CD8-positive, alpha-beta T cell (primary cell): ENCODE measurements at regions of chr6 and their contacts with region 1.

Region 1: DNA sequence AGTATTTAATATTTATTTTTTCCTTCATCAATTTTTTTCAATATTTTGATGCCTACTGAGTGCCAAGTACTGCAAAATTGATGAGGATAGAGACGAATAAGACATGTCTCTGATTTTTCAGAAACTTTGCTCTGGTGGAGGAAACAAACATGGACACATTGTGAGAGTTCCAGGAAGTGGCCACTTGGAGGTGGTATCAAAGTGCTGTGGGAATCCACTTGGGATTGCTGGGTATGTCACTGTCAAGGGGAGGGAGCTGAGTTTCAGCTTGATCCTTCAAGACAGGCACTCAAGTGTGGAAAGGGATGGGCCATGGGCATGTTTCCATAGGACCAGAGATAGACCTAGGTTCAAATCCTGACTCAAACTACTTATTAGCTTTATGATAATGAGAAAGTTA is 24.5 kb upstream of the ABCC10 start:
- DNase-seq: no peak
- ATAC-seq: no peak
- H3K4me3 ChIP-seq: no peak overlapping the region
- H3K4me3 Mint-ChIP-seq: no peak overlapping the region
- H3K27ac ChIP-seq: no peak overlapping the region
- H3K27ac Mint-ChIP-seq: no peak overlapping the region
- H3K4me1 ChIP-seq: peaks cover 2% of the 10 kb centered on the region
- H3K4me1 Mint-ChIP-seq: peaks cover 3% of the 10 kb centered on the region
- H3K27me3 ChIP-seq: peaks cover 0 to 3% of the 10 kb centered on the region in 2 experiments
- H3K27me3 Mint-ChIP-seq: peaks cover 23% of the 10 kb centered on the region
- CTCF ChIP-seq: no peak

Region 2: DNA sequence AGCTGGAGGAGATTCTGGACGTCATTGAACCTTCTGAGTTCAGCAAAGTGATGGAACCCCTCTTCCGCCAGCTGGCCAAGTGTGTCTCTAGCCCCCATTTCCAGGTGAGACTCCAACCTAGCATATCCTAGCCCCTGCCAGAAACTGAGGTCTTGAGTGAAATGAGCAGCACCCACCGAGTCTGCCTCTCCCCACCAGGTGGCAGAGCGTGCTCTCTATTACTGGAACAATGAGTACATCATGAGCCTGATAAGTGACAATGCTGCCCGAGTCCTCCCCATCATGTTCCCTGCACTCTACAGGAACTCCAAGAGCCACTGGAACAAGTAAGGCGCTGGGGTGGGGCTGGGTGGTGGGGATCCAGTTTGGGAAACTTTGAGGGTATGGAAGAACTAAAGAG is 393.7 kb before region 1 on chr6:
- CTCF ChIA-PET with region 1: no interaction called
- POLR2A ChIA-PET with region 1: no interaction called
- intact Hi-C with region 1: no loop called
- DNase-seq: peak in 5 of 9 experiments; percentile 33 to 62 (median 47)
- ATAC-seq: no peak
- H3K4me3 ChIP-seq: no peak overlapping the region
- H3K4me3 Mint-ChIP-seq: no peak overlapping the region
- H3K27ac ChIP-seq: no peak overlapping the region
- H3K27ac Mint-ChIP-seq: no peak overlapping the region
- H3K4me1 ChIP-seq: peaks cover 14% of the 10 kb centered on the region
- H3K4me1 Mint-ChIP-seq: peaks cover 30% of the 10 kb centered on the region
- H3K27me3 ChIP-seq: no peaks in the 10 kb centered on the region
- H3K27me3 Mint-ChIP-seq: no peaks in the 10 kb centered on the region
- CTCF ChIP-seq: peak; percentile 17

Region 3: GRCh38 chr6:43263314-43264178 is 139.3 kb before region 1 on chr6:
- CTCF ChIA-PET with region 1: interaction called, 52 read pairs
- POLR2A ChIA-PET with region 1: no interaction called
- intact Hi-C with region 1: loop called in 1 of 2 experiments (anchors 1 kb)
- DNase-seq: peak; percentile 57 to 84 (median 75)
- ATAC-seq: peak; percentile 95
- H3K4me3 ChIP-seq: no peak overlapping the region
- H3K4me3 Mint-ChIP-seq: no peak overlapping the region
- H3K27ac ChIP-seq: no peak overlapping the region
- H3K27ac Mint-ChIP-seq: no peak overlapping the region
- H3K4me1 ChIP-seq: no peaks in the 10 kb centered on the region
- H3K4me1 Mint-ChIP-seq: no peaks in the 10 kb centered on the region
- H3K27me3 ChIP-seq: no peaks in the 10 kb centered on the region
- H3K27me3 Mint-ChIP-seq: peaks cover 3% of the 10 kb centered on the region
- CTCF ChIP-seq: peak; percentile 57

Region 4: GRCh38 chr6:43269273-43270007 is 133.4 kb before region 1 on chr6:
- CTCF ChIA-PET with region 1: interaction called, 52 read pairs
- POLR2A ChIA-PET with region 1: no interaction called
- intact Hi-C with region 1: no loop called
- DNase-seq: peak in 8 of 9 experiments; percentile 22 to 61 (median 44)
- ATAC-seq: peak; percentile 81
- H3K4me3 ChIP-seq: peak overlapping the region; percentile 49 to 54
- H3K4me3 Mint-ChIP-seq: peak overlapping the region; percentile 76
- H3K27ac ChIP-seq: no peak overlapping the region
- H3K27ac Mint-ChIP-seq: no peak overlapping the region
- H3K4me1 ChIP-seq: peaks cover 10% of the 10 kb centered on the region
- H3K4me1 Mint-ChIP-seq: peaks cover 6% of the 10 kb centered on the region
- H3K27me3 ChIP-seq: peaks cover 0 to 4% of the 10 kb centered on the region in 2 experiments
- H3K27me3 Mint-ChIP-seq: peaks cover 15% of the 10 kb centered on the region
- CTCF ChIP-seq: no peak

Region 5: GRCh38 chr6:43308101-43308989 is 94.5 kb before region 1 on chr6 and contains the start of gene CRIP3:
- CTCF ChIA-PET with region 1: interaction called, 24 read pairs
- POLR2A ChIA-PET with region 1: interaction called, 3 read pairs
- intact Hi-C with region 1: loop called (anchors 1 kb)
- DNase-seq: peak in 8 of 9 experiments; percentile 21 to 68 (median 50)
- ATAC-seq: peak; percentile 86
- H3K4me3 ChIP-seq: peak within 1 kb of the TSS; percentile 36 to 48
- H3K4me3 Mint-ChIP-seq: peak within 1 kb of the TSS; percentile 77
- H3K27ac ChIP-seq: no peak within 1 kb of the TSS
- H3K27ac Mint-ChIP-seq: no peak within 1 kb of the TSS
- H3K4me1 ChIP-seq: peaks cover 12% of the 10 kb centered on the region
- H3K4me1 Mint-ChIP-seq: peaks cover 9% of the 10 kb centered on the region
- H3K27me3 ChIP-seq: no peaks in the 10 kb centered on the region
- H3K27me3 Mint-ChIP-seq: peaks cover 5% of the 10 kb centered on the region
- CTCF ChIP-seq: peak; percentile 41
- total RNA-seq, gene CRIP3: 0.64 to 0.84 TPM

Region 6: GRCh38 chr6:43361269-43361668 is 41.6 kb before region 1 on chr6:
- CTCF ChIA-PET with region 1: interaction called, 47 read pairs
- POLR2A ChIA-PET with region 1: no interaction called
- intact Hi-C with region 1: loop called in 1 of 2 experiments (anchors 1 kb)
- DNase-seq: peak in 1 of 9 experiments; percentile 30
- ATAC-seq: peak; percentile 48
- H3K4me3 ChIP-seq: no peak overlapping the region
- H3K4me3 Mint-ChIP-seq: no peak overlapping the region
- H3K27ac ChIP-seq: no peak overlapping the region
- H3K27ac Mint-ChIP-seq: no peak overlapping the region
- H3K4me1 ChIP-seq: peaks cover 3% of the 10 kb centered on the region
- H3K4me1 Mint-ChIP-seq: peaks cover 30% of the 10 kb centered on the region
- H3K27me3 ChIP-seq: no peaks in the 10 kb centered on the region
- H3K27me3 Mint-ChIP-seq: no peaks in the 10 kb centered on the region
- CTCF ChIP-seq: no peak

Region 7: DNA sequence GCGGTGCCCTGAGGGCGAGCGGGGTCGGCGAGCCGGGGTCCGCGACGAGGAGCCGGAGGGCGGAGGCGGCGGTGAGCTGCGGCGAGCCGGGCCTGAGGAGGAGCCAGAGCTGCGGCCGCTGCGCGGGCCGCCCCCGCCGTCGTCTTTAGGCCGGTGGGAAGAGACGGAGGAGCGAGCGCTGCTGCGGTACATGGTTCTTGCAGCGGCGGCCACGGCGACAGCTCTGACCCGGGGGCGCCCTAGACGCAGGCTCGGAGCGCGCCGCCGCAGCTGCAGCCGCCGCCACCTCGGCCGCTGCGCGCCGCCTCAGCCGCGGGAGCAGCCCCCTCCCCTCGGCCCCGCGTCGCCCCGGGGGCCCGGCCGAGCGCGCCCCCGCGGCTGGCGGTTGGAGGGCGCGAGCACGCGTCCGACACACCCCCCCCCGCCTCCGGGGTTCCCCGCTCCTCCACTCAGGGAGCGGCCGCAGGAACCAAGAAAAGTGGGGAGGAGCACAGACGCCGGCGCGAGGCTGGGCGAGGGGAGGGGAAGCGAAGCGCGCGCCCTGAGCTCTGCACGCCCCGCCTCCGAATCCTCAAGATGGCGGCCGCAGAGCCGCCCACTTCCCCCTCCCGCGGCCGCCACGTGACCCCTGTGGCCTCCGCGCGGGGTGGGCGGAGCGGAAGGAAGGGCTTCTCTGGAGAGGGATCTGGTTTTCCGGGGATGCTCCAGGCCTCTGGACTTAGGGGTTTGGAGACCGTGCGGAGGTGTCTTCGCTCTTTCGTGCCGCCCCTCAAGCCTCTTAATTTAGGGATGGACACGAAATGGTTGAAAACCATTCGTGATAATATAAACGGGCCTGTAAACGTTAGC is 33.4 kb before region 1 on chr6 and contains the start of gene ZNF318:
- CTCF ChIA-PET with region 1: interaction called, 10 read pairs
- POLR2A ChIA-PET with region 1: interaction called, 10 read pairs
- intact Hi-C with region 1: loop called (anchors 1 to 2 kb)
- DNase-seq: peak; percentile 85 to 98 (median 93)
- ATAC-seq: peak; percentile 95
- H3K4me3 ChIP-seq: peak within 1 kb of the TSS; percentile 69 to 81
- H3K4me3 Mint-ChIP-seq: peak within 1 kb of the TSS; percentile 89
- H3K27ac ChIP-seq: peak within 1 kb of the TSS; percentile 76 to 87
- H3K27ac Mint-ChIP-seq: peak within 1 kb of the TSS; percentile 96
- H3K4me1 ChIP-seq: peaks cover 33% of the 10 kb centered on the region
- H3K4me1 Mint-ChIP-seq: peaks cover 43% of the 10 kb centered on the region
- H3K27me3 ChIP-seq: no peaks in the 10 kb centered on the region
- H3K27me3 Mint-ChIP-seq: no peaks in the 10 kb centered on the region
- CTCF ChIP-seq: no peak
- total RNA-seq, gene ZNF318: 18.2 TPM

Region 8: GRCh38 chr6:43386492-43386891 is 16.3 kb before region 1 on chr6:
- CTCF ChIA-PET with region 1: interaction called, 15 read pairs
- POLR2A ChIA-PET with region 1: interaction called, 8 read pairs
- intact Hi-C with region 1: loop called (anchors 1 to 2 kb)
- DNase-seq: peak in 2 of 9 experiments; percentile 43 to 61
- ATAC-seq: no peak
- H3K4me3 ChIP-seq: no peak overlapping the region
- H3K4me3 Mint-ChIP-seq: no peak overlapping the region
- H3K27ac ChIP-seq: no peak overlapping the region
- H3K27ac Mint-ChIP-seq: no peak overlapping the region
- H3K4me1 ChIP-seq: peaks cover 54% of the 10 kb centered on the region
- H3K4me1 Mint-ChIP-seq: peaks cover 66% of the 10 kb centered on the region
- H3K27me3 ChIP-seq: peaks cover 0 to 7% of the 10 kb centered on the region in 2 experiments
- H3K27me3 Mint-ChIP-seq: peaks cover 6% of the 10 kb centered on the region
- CTCF ChIP-seq: no peak

Region 9: GRCh38 chr6:43584892-43585570 is 182.2 kb after region 1 on chr6:
- CTCF ChIA-PET with region 1: no interaction called
- POLR2A ChIA-PET with region 1: no interaction called
- intact Hi-C with region 1: no loop called
- DNase-seq: peak in 5 of 9 experiments; percentile 9 to 52 (median 31)
- ATAC-seq: peak; percentile 36
- H3K4me3 ChIP-seq: no peak overlapping the region
- H3K4me3 Mint-ChIP-seq: peak overlapping the region; percentile 51
- H3K27ac ChIP-seq: peak overlapping the region; percentile 27 to 62
- H3K27ac Mint-ChIP-seq: peak overlapping the region; percentile 81
- H3K4me1 ChIP-seq: peaks cover 22% of the 10 kb centered on the region
- H3K4me1 Mint-ChIP-seq: peaks cover 27% of the 10 kb centered on the region
- H3K27me3 ChIP-seq: no peaks in the 10 kb centered on the region
- H3K27me3 Mint-ChIP-seq: no peaks in the 10 kb centered on the region
- CTCF ChIP-seq: no peak